HEK293 (cell line): ENCODE measurements at regions of chr5 and their contacts with region 1.

Region 1: GRCh38 chr5:154072414-154073171 is 33.8 kb downstream of the MFAP3 start:
- H3K4me3 ChIP-seq: no peak overlapping the region
- H3K27ac ChIP-seq: no peak overlapping the region
- H3K4me1 ChIP-seq: no peaks in the 10 kb centered on the region
- CTCF ChIP-seq: peak; percentile 92

Region 2: DNA sequence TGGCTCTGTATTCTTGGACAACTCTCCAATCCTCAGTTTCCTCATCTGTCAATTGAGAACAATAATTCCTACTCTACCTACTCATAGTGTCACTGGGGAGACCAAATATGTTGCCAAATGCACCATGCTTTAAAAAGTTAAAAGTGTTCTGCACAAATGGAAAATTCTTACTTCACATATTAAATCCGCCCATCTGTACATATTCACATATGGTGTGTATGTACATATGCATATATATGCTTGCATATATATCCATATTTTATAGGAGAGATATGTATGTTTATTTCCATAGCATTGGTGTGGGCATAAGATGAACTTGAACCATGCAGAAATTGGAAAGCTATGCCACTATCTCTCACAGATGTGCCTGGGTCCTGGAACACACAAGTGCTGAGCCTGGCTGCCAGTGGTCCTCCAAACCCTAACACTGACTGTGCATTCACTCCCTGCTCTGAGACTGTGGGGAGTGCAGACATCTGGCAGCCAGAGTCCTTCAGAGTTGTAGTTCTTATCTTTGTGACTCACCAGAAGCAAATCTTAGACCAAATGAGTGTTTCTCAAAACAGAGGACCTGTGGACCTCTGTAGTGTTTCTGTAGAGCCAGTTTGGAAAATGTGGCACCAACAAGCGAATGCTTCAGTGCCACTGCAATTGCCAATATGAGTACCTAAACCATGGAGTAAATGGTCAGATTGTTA is 413.4 kb before region 1 on chr5:
- CTCF ChIA-PET with region 1: no interaction called
- POLR2A ChIA-PET with region 1: no interaction called
- H3K4me3 ChIP-seq: no peak overlapping the region
- H3K27ac ChIP-seq: no peak overlapping the region
- H3K4me1 ChIP-seq: no peaks in the 10 kb centered on the region
- CTCF ChIP-seq: no peak

Region 3: DNA sequence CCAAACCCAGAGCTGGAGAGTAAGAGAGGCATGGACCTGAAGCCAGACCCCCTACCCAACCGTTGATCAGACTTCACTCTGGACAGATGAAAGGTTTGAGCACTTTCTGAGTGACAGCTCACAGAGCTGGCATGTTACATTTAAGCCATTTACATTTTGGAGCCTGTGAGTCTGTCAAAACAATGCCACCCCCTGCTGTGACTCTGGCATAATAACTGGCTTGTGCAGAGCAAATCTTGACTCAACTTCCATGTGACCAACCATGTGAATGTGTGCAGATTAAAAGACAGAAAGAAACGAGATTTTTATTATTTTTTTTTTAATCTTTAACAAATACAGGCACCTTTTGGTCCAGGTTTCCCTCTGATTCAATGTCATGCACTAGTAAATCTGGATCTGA is 14.7 kb after region 1 on chr5:
- CTCF ChIA-PET with region 1: interaction called, 11 read pairs
- POLR2A ChIA-PET with region 1: interaction called, 3 read pairs
- H3K4me3 ChIP-seq: no peak overlapping the region
- H3K27ac ChIP-seq: no peak overlapping the region
- H3K4me1 ChIP-seq: peaks cover 16% of the 10 kb centered on the region
- CTCF ChIP-seq: no peak

Region 4: GRCh38 chr5:154189819-154190594 is 117.4 kb after region 1 on chr5:
- CTCF ChIA-PET with region 1: interaction called, 143 read pairs
- POLR2A ChIA-PET with region 1: interaction called, 3 read pairs
- H3K4me3 ChIP-seq: peak overlapping the region; percentile 65
- H3K27ac ChIP-seq: peak overlapping the region; percentile 60; the same call in 1 of the 2 replicates
- H3K4me1 ChIP-seq: peaks cover 7% of the 10 kb centered on the region; the same call in 1 of the 2 replicates
- CTCF ChIP-seq: peak; percentile 89

Region 5: DNA sequence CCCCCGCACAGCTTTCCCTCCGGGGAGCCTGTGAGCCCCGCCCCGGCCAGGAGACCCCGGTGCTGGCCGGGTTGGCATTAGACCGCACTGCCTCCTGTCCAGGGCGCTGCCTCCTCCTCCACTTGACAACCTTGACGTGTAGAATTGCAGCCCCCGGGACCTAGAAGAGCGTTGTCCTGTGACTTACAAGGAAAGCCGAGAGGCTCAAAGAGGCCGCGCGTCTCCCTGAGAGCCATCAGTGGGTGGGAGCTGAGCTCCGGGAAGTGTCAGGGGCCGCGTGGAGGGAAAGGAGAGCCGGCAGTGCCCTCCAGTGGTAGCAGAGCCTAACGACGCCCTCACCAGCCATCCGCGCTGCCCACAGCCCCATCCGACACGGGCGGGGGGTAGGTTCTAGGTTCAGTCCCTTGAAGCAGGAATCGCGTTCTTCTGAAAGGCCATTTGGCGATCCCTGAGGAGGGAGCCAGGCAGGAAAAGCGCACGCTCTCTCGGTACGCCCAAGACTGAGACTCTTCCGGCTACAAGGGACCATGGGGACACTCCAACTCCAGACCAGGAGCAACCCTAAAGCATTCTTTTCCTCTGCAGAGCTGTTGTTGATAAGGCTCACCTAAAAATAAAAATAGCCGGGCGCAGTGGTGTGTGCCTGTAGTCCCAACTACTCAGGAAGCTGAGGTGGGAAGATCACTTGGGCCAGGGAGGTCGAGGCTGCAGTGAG is 332.6 kb after region 1 on chr5:
- CTCF ChIA-PET with region 1: interaction called, 96 read pairs
- POLR2A ChIA-PET with region 1: interaction called, 6 read pairs
- H3K4me3 ChIP-seq: no peak overlapping the region; the same call in 1 of the 2 replicates
- H3K27ac ChIP-seq: no peak overlapping the region
- H3K4me1 ChIP-seq: no peaks in the 10 kb centered on the region
- CTCF ChIP-seq: peak; percentile 95